Heart right ventricle (tissue), 16 donors: ENCODE measurements at regions of chr3 and their contacts with region 1.

Region 1: DNA sequence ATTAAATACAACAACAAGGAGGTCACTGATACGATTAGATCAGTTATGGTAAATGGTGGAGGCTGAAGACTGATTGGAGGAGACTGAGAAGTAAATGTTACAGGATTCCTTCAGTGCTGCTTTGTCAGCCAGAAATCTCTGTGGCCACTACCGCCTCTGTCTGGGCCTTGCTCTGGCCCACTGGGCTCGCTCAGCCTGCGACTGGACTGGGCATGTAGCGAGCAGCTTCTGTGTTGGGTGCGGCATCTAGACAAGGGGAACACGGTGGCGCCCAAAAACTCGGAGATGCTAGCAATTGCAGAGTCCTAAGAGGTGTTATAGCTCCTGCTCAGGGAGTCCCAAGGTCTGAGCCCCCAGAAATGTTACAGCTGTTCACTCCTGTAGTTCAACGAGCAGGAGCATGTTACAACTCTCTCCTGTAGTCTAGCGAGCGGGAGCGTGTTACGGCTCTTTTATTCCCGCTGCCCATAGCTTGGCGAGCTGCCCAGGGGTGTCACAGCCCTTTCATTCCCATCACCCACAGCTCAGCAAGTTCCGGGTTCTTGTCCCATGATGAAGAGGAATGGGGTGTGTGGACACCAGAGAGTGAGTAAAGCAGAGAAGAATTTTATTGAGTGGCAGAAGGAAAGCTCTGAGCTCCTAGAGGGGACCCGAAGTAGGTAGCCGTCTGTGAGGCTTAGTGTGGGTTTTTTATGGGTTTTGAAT is 24.7 kb downstream of the SLC15A2 start:
- DNase-seq: no peak
- ATAC-seq: no peak
- H3K4me3 ChIP-seq: no peak overlapping the region
- H3K27ac ChIP-seq: no peak overlapping the region
- H3K4me1 ChIP-seq: peaks cover 0 to 4% (median 0%) of the 10 kb centered on the region in 9 donors
- H3K27me3 ChIP-seq: no peaks in the 10 kb centered on the region
- CTCF ChIP-seq: no peak

Region 2: DNA sequence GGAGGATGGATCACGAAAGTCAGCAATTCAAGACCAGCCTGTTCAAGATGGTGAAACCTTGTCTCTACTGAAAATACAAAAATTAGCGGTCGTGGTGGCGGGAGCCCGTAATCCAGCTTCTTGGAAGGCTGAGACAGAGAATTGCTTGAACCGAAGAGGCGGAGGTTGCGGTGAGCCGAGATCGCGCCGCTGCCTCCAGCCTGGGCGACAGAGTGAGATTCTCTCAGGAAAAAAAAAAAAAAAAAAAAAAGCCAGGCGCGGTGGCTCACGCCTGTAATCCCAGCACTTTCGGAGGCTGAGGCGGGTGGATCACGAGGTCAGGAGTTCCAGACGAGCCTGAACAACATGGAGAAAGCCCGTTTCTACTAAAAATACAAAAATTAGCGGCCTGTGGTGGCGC is 79.0 kb before region 1 on chr3:
- intact Hi-C with region 1: loop called in 1 of 10 experiments (anchors 2 kb)
- DNase-seq: no peak
- ATAC-seq: no peak
- H3K4me3 ChIP-seq: no peak overlapping the region
- H3K27ac ChIP-seq: no peak overlapping the region
- H3K4me1 ChIP-seq: peaks cover 0 to 12% (median 6%) of the 10 kb centered on the region in 9 donors
- H3K27me3 ChIP-seq: no peaks in the 10 kb centered on the region
- CTCF ChIP-seq: no peak

Region 3: DNA sequence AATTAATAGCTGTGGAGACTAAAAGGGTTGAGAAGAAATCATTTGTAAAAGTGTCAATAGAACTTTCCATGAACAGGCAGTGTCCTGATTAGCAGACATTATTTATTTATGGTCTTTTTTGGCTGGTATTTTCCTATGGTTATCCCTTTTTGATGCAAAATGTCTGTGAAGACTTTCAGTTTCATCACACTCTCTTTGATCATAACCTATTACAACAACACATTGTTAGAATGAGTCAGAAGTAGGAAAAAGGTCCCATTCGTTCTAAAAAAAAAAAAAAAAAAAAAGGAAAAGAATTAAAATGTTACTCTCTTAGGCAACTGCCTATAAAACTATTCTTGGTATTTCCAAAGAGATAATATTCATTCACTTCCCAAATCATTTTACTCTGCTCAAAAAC is 938.1 kb after region 1 on chr3:
- intact Hi-C with region 1: no loop called
- DNase-seq: no peak
- ATAC-seq: no peak
- H3K4me3 ChIP-seq: no peak overlapping the region
- H3K27ac ChIP-seq: no peak overlapping the region
- H3K4me1 ChIP-seq: peaks cover 0 to 3% (median 0%) of the 10 kb centered on the region in 9 donors
- H3K27me3 ChIP-seq: no peaks in the 10 kb centered on the region
- CTCF ChIP-seq: no peak